ENCODE measurements at regions of chr11 and their contacts with region 1.

Region 1: GRCh38 chr11:43358801-43359421 is at the start of gene TTC17:
- DNase-seq: peak; percentile 67
- ATAC-seq: peak; percentile 96
- H3K4me3 ChIP-seq: peak within 1 kb of the TSS; percentile 62
- H3K27ac ChIP-seq: peak within 1 kb of the TSS; percentile 96
- H3K4me1 ChIP-seq: peaks cover 6% of the 10 kb centered on the region; the same call in 1 of the 2 replicates
- H3K27me3 ChIP-seq: no peaks in the 10 kb centered on the region
- CTCF ChIP-seq: no peak
- EP300 ChIP-seq: no peak
- POLR2A ChIP-seq: peak; percentile 99
- RAD21 ChIP-seq: no peak
- polyA plus RNA-seq, gene TTC17: 15.9 to 20.0 TPM

Region 2: DNA sequence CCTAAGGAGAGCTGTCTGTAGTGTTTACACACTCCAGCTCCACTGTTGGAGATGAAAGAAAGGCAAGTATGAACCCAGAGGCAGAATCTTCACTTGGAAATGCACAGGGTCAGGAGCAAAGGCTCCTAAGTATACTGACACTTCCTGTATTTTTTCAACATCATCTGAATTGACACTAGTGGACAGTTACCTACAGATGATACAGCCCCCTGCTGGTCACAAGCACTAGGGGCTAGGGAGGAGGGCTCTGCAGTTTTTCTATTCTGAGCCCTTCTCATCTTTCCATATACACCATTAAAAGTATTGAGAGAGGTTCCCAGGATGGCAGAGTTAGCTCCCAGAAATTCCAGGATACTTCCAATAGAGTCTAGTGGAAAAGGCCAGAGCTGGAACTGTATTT is 337.4 kb before region 1 on chr11:
- CTCF ChIA-PET with region 1: no interaction called
- POLR2A ChIA-PET with region 1: no interaction called
- RAD21 ChIA-PET with region 1: no interaction called
- SMC1A ChIA-PET with region 1: no interaction called
- in situ Hi-C with region 1: no loop called
- intact Hi-C with region 1: no loop called
- DNase-seq: no peak
- ATAC-seq: peak; percentile 96
- H3K4me3 ChIP-seq: no peak overlapping the region
- H3K27ac ChIP-seq: no peak overlapping the region
- H3K4me1 ChIP-seq: no peaks in the 10 kb centered on the region
- H3K27me3 ChIP-seq: no peaks in the 10 kb centered on the region
- CTCF ChIP-seq: peak; percentile 31 to 55 (median 48); a peak in 3 of 6 replicates
- EP300 ChIP-seq: no peak
- POLR2A ChIP-seq: no peak
- RAD21 ChIP-seq: peak; percentile 28; the same call in 1 of the 2 replicates

Region 3: GRCh38 chr11:43145653-43146052 is 213.3 kb before region 1 on chr11:
- CTCF ChIA-PET with region 1: no interaction called
- POLR2A ChIA-PET with region 1: no interaction called
- RAD21 ChIA-PET with region 1: no interaction called
- SMC1A ChIA-PET with region 1: no interaction called
- in situ Hi-C with region 1: no loop called
- intact Hi-C with region 1: no loop called
- DNase-seq: peak; percentile 64
- ATAC-seq: peak; percentile 90
- H3K4me3 ChIP-seq: no peak overlapping the region
- H3K27ac ChIP-seq: peak overlapping the region; percentile 87
- H3K4me1 ChIP-seq: peaks cover 18% of the 10 kb centered on the region
- H3K27me3 ChIP-seq: no peaks in the 10 kb centered on the region
- CTCF ChIP-seq: no peak
- EP300 ChIP-seq: peak; percentile 30 to 59; a peak in 2 of 4 replicates
- POLR2A ChIP-seq: peak; percentile 60; the same call in 1 of the 2 replicates
- RAD21 ChIP-seq: no peak

Region 4: DNA sequence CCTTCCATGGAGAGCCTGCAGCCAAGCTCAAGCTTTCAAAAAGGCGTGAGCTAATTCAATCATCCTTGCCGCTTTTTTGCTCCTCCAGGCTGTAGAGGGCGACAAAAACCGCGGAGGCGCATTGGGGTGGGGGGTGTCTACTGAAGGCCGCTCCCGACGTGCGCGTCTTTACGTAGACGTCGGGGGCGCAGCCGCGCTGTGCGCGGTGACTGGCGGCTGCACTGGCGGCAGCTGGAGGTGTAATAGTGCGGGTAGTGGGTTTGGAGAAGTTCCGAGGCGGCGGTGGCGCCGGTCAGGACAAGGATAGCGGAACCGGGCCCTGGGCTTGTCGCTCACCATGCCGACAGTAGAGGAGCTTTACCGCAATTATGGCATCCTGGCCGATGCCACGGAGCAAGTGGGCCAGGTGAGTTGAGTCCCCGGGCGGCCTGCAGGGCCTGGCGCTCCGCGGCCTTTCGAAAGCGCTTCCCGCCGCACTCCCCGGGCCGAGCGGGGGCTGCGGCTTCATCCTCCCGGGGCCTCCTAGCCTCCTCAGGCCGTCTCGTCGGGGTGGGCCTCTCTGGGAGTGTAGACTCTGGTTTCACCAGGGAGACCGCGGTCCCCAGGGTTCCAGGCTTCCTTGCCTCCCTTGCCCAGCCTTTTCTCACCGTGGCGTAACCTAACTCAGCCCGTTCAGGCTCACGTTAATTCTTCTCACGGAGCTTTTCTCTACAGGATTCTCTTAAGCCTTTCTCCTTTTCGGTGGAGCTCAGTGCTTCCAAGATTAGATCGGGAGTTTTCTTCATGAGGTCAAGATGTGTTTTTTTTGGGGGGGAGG is 46.9 kb before region 1 on chr11 and contains the start of gene API5:
- CTCF ChIA-PET with region 1: interaction called, 26 read pairs
- POLR2A ChIA-PET with region 1: interaction called, 15 read pairs
- RAD21 ChIA-PET with region 1: interaction called, 17 read pairs
- SMC1A ChIA-PET with region 1: interaction called, 9 read pairs
- in situ Hi-C with region 1: no loop called
- intact Hi-C with region 1: loop called (anchors 2 kb)
- DNase-seq: peak; percentile 69
- ATAC-seq: peak; percentile 98
- H3K4me3 ChIP-seq: peak within 1 kb of the TSS; percentile 96
- H3K27ac ChIP-seq: peak within 1 kb of the TSS; percentile 77
- H3K4me1 ChIP-seq: peaks cover 8% of the 10 kb centered on the region
- H3K27me3 ChIP-seq: no peaks in the 10 kb centered on the region
- CTCF ChIP-seq: peak; percentile 81 to 98 (median 81); a peak in 5 of 6 replicates
- EP300 ChIP-seq: 0 out of 4 replicates have a peak, but pooled peaks of 1 of the 2 experiments have one; percentile 32
- POLR2A ChIP-seq: peak; percentile 93
- RAD21 ChIP-seq: peak; percentile 53
- polyA plus RNA-seq, gene API5: 52.0 to 55.1 TPM

Region 5: DNA sequence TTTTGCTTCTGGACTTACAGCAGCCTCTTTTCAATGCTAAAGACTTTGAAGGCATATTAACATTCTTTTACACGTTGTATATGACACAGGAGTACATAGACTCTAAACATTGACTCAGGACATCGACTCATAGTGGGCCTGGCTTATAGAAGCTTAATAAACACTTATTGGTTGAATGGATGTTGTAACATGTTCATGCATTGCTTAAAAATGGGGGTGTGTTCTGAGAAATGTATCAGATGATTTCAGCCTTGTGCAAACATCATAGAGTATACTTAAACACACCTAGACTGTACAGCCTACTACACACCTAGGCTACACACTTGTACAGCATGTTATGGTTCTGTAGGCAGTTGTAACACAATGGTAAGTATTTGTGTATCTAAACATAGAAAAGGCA is 17.7 kb after region 1 on chr11:
- CTCF ChIA-PET with region 1: interaction called, 4 read pairs
- POLR2A ChIA-PET with region 1: interaction called, 5 read pairs
- RAD21 ChIA-PET with region 1: no interaction called
- SMC1A ChIA-PET with region 1: interaction called, 10 read pairs
- in situ Hi-C with region 1: no loop called
- intact Hi-C with region 1: no loop called
- DNase-seq: no peak
- ATAC-seq: no peak
- H3K4me3 ChIP-seq: no peak overlapping the region
- H3K27ac ChIP-seq: no peak overlapping the region
- H3K4me1 ChIP-seq: no peaks in the 10 kb centered on the region
- H3K27me3 ChIP-seq: no peaks in the 10 kb centered on the region
- CTCF ChIP-seq: no peak
- EP300 ChIP-seq: no peak
- POLR2A ChIP-seq: no peak
- RAD21 ChIP-seq: no peak

Region 6: DNA sequence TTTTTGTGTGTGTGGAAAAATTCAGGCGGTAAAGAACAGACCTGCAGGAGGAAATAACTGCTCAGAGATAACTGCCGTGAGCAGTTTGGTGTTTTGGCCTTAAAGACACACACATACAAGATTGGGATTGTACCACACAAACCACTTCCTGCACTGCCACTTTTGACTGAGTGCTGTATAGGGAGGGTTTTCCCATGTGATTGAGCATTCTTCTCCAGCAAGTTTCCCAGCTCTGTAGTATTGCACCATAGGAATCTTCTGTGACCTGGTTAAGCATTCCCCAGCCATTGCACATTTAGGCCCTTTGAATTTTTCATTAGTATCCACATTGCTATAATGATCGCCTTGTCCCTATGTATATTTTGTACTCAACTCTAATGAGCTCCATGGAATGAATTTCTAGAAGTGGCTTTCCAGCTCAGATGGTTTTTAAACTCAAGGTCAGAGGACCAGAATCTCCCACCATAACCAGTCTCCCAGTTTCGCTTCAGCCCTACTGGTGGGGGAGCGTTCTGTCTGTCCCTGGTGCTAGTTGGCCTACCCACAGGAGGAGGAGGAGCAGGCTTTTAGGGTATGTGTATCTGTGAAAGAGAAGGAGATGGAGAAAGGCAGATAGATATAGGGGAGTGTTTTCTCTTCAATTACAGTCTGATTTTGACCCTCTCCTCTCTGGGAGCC is 1215.8 kb after region 1 on chr11:
- CTCF ChIA-PET with region 1: no interaction called
- POLR2A ChIA-PET with region 1: no interaction called
- RAD21 ChIA-PET with region 1: no interaction called
- SMC1A ChIA-PET with region 1: no interaction called
- in situ Hi-C with region 1: loop called (anchors 25 kb)
- intact Hi-C with region 1: no loop called
- DNase-seq: peak; percentile 66
- ATAC-seq: peak; percentile 66
- H3K4me3 ChIP-seq: peak overlapping the region; percentile 38; the same call in 1 of the 2 replicates
- H3K27ac ChIP-seq: peak overlapping the region; percentile 88
- H3K4me1 ChIP-seq: peaks cover 63% of the 10 kb centered on the region
- H3K27me3 ChIP-seq: no peaks in the 10 kb centered on the region
- CTCF ChIP-seq: no peak
- EP300 ChIP-seq: peak; percentile 23 to 37; a peak in 1 of 4 replicates
- POLR2A ChIP-seq: no peak
- RAD21 ChIP-seq: no peak